Mucosa of descending colon (tissue), 3 donors: ENCODE measurements at regions of chr6 and their contacts with region 1.

Region 1: DNA sequence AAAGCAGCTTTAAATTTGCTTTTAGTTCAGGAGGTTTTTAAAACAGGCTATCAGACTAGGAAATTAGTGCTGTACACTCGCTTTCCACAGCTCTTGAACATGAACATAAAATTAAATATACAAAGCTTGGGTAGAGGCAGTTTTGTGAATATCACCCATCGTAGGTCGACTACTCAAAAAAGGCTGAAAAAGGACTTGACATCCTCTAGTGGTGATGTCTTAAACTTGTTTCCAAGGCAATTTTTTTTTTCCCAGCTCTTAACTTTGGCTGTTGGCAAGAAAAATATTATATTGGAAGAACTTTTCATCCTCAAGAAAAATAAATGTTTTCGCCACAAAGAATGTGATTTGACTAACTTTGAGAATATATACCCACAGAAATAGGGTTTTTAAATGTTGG is 2.9 kb downstream of the MAP7 start:
- DNase-seq: no peak
- ATAC-seq: no peak
- H3K4me3 ChIP-seq: no peak overlapping the region
- H3K4me1 ChIP-seq: peaks cover 16% of the 10 kb centered on the region
- CTCF ChIP-seq: no peak

Region 2: DNA sequence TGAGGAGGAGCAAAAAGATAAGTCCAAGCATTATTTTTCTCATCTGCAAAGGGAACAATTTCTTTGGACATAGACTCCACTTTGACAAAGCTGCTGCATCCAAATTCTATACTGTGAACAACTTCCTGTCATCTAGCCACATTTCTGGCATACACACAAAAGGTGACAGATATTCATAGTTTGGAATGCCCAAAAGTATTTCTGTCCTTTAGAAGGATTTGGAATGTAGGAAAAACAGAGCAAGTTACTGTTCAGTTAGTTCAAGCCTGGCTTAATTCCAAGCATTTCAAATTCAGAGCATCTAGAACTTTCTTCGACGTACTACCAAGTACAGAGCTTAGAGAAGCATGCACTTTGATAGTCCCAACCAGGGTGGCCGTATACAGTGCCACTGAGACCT is 561.9 kb before region 1 on chr6:
- intact Hi-C with region 1: no loop called
- DNase-seq: no peak
- ATAC-seq: no peak
- H3K4me3 ChIP-seq: no peak overlapping the region
- H3K4me1 ChIP-seq: no peaks in the 10 kb centered on the region
- CTCF ChIP-seq: no peak

Region 3: DNA sequence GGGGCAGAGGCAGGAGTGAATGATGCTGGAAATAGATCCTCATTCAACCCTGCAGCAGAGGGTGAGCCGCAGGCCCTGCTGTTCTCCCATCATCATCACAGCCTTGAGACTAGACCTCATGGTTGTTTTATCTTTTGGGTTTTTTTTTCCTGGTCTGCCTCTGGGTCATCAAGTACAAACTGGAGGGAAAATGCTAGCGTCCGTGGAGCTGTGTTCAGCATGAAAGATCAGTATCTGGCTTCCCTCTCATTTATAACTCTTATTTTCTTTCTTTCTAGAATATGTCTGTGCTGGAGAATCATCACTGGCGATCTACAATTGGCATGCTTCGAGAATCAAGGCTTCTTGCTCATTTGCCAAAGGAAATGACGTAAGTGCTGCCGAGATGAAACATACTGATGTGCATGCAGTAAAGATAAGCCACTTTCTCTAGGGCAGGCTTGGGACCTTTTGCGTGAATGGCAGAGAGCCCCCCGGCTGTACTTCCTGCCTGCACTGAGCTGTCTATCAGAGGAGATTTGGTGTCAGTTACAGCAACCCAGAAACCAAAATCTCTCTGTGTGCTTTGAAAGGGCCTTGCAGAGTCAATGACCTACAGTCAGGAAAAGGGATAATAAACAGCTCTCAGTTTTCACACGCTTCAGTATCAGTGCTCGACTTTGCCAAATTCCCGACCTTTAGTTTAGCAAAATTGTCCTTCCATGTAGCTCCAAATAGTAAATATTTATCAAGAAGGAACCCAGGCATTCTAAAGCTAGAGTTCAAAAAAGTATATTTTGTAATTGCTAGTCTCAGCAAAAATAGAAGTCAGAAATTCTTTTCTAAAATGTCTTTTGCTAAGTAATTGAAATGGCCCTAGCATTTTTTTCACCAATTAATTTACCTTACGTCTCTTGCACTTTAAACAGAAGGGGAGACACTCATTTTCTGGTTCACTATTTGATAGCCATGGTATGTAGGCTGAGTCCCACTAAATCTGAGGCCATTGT is 373.5 kb before region 1 on chr6:
- intact Hi-C with region 1: no loop called
- DNase-seq: no peak
- ATAC-seq: peak; percentile 27
- H3K4me3 ChIP-seq: no peak overlapping the region
- H3K4me1 ChIP-seq: no peaks in the 10 kb centered on the region
- CTCF ChIP-seq: no peak

Region 4: GRCh38 chr6:136378886-136379285 is 168.4 kb before region 1 on chr6:
- intact Hi-C with region 1: loop called in 1 of 2 experiments (anchors 10 kb)
- DNase-seq: peak in 1 of 3 donors; percentile 26
- ATAC-seq: peak; percentile 50
- H3K4me3 ChIP-seq: no peak overlapping the region
- H3K4me1 ChIP-seq: no peaks in the 10 kb centered on the region
- CTCF ChIP-seq: no peak